ENCODE measurements at regions of chr2 and their contacts with region 1.

Region 1: GRCh38 chr2:152432206-152432653 is 97.3 kb downstream of the FMNL2 start:
- DNase-seq: peak; percentile 34 to 60
- ATAC-seq: peak; percentile 82 to 94 (median 90)
- H3K4me3 ChIP-seq: no peak overlapping the region
- H3K27ac ChIP-seq: peak overlapping the region; percentile 79
- H3K4me1 ChIP-seq: peaks cover 44% of the 10 kb centered on the region
- H3K27me3 ChIP-seq: no peaks in the 10 kb centered on the region
- CTCF ChIP-seq: no peak

Region 2: GRCh38 chr2:152480821-152481399 is 48.7 kb after region 1 on chr2:
- intact Hi-C with region 1: loop called in 1 of 2 experiments (anchors 1 kb)
- DNase-seq: no peak
- ATAC-seq: no peak
- H3K4me3 ChIP-seq: no peak overlapping the region
- H3K27ac ChIP-seq: no peak overlapping the region
- H3K4me1 ChIP-seq: peaks cover 28% of the 10 kb centered on the region
- H3K27me3 ChIP-seq: no peaks in the 10 kb centered on the region
- CTCF ChIP-seq: no peak

Region 3: GRCh38 chr2:152623076-152623740 is 191.0 kb after region 1 on chr2:
- intact Hi-C with region 1: no loop called
- DNase-seq: no peak
- ATAC-seq: no peak
- H3K4me3 ChIP-seq: no peak overlapping the region
- H3K27ac ChIP-seq: no peak overlapping the region
- H3K4me1 ChIP-seq: peaks cover 17% of the 10 kb centered on the region
- H3K27me3 ChIP-seq: no peaks in the 10 kb centered on the region
- CTCF ChIP-seq: no peak